WTC11 (cell line): ENCODE measurements at regions of chr19 and their contacts with region 1.

Region 1: GRCh38 chr19:19366612-19367396 is 38.7 kb upstream of the GATAD2A start:
- DNase-seq: peak; percentile 85
- ATAC-seq: peak; percentile 97
- H3K4me3 Mint-ChIP-seq: peak overlapping the region; percentile 8; the same call in 1 of the 2 replicates
- H3K27ac Mint-ChIP-seq: peak overlapping the region; percentile 71
- H3K4me1 Mint-ChIP-seq: peaks cover 15% of the 10 kb centered on the region
- H3K27me3 Mint-ChIP-seq: no peaks in the 10 kb centered on the region
- CTCF ChIP-seq: peak; percentile 83

Region 2: DNA sequence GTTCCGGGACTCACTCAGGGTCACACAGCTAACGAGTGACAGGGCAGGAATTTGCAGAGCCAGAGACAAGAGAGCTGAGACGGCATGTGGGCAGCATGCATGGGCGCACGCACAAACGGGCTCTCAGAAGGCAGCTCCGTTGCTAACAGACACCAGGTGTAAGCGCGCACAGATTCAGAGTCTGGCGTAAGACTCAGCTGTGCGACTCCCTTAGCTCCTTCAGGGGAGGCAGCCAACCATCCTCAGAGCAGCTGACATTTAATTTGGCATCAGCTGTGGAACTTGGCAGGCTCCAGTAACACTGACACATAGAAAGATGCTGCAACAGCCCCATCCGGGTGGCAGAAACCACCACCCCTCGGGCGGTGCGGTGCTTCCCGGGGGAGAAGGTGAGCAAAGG is 86.2 kb before region 1 on chr19:
- CTCF ChIA-PET with region 1: no interaction called
- POLR2A ChIA-PET with region 1: no interaction called
- DNase-seq: no peak
- ATAC-seq: no peak
- H3K4me3 Mint-ChIP-seq: no peak overlapping the region
- H3K27ac Mint-ChIP-seq: peak overlapping the region; percentile 57; the same call in 1 of the 2 replicates
- H3K4me1 Mint-ChIP-seq: no peaks in the 10 kb centered on the region
- H3K27me3 Mint-ChIP-seq: no peaks in the 10 kb centered on the region
- CTCF ChIP-seq: no peak

Region 3: DNA sequence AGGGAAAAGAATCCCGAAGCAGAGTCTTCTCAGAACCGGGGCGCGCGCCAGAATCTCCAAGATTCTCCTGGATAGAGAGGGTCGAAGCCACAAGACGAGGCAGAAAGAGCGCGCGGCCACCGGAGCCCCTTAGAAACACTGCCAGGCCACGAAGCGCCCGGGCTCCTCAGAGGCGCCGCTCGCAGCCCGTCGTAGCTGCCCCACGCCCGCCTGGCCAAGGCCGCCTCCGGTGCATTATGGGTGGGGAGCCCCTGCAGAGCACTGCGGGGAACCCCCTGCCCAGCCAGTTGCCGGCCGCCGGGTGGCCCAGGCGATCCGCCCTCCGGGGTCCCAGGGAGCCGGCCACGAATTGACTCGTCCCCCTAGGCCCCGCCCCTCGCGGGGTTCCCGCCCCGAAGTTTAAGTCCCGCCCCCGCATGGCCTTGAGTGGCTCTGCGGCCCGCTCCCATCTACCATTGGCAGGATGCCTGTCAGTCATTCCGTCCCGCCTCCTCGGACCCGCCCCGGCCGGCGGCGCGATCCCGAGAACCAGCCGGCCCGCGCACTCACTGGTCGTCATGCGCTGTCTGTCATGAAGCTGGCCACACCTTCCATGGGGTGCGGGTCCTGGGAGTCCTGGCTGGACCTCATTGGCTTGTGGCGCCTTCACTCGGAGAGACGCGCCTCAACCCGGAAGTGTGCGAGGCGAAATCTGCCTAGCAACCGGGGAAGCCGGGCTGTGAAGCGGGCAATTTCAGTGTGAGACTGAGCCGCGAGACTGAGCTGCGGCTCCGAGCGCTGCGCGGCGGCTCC is 18.5 kb after region 1 on chr19:
- CTCF ChIA-PET with region 1: interaction called, 16 read pairs
- POLR2A ChIA-PET with region 1: no interaction called
- DNase-seq: peak; percentile 100
- ATAC-seq: peak; percentile 97
- H3K4me3 Mint-ChIP-seq: peak overlapping the region; percentile 70
- H3K27ac Mint-ChIP-seq: peak overlapping the region; percentile 84
- H3K4me1 Mint-ChIP-seq: peaks cover 37% of the 10 kb centered on the region
- H3K27me3 Mint-ChIP-seq: peaks cover 9% of the 10 kb centered on the region
- CTCF ChIP-seq: no peak

Region 4: GRCh38 chr19:19404879-19405860 is 38.4 kb after region 1 on chr19 and contains the start of gene GATAD2A:
- CTCF ChIA-PET with region 1: interaction called, 22 read pairs
- POLR2A ChIA-PET with region 1: interaction called, 5 read pairs
- DNase-seq: peak; percentile 90
- ATAC-seq: peak; percentile 81
- H3K4me3 Mint-ChIP-seq: peak within 1 kb of the TSS; percentile 96
- H3K27ac Mint-ChIP-seq: peak within 1 kb of the TSS; percentile 96
- H3K4me1 Mint-ChIP-seq: peaks cover 48% of the 10 kb centered on the region
- H3K27me3 Mint-ChIP-seq: peaks cover 7% of the 10 kb centered on the region; the same call in 1 of the 2 replicates
- CTCF ChIP-seq: no peak
- total RNA-seq, gene GATAD2A: 186 to 209 TPM (median 189 TPM) in 3 replicates

Region 5: GRCh38 chr19:19453125-19453454 is 86.3 kb after region 1 on chr19:
- CTCF ChIA-PET with region 1: no interaction called
- POLR2A ChIA-PET with region 1: no interaction called
- DNase-seq: no peak
- ATAC-seq: no peak
- H3K4me3 Mint-ChIP-seq: no peak overlapping the region
- H3K27ac Mint-ChIP-seq: peak overlapping the region; percentile 60
- H3K4me1 Mint-ChIP-seq: peaks cover 27% of the 10 kb centered on the region
- H3K27me3 Mint-ChIP-seq: no peaks in the 10 kb centered on the region
- CTCF ChIP-seq: no peak